Calu3 (cell line): ENCODE measurements at regions of chr1 and their contacts with region 1.

Region 1: DNA sequence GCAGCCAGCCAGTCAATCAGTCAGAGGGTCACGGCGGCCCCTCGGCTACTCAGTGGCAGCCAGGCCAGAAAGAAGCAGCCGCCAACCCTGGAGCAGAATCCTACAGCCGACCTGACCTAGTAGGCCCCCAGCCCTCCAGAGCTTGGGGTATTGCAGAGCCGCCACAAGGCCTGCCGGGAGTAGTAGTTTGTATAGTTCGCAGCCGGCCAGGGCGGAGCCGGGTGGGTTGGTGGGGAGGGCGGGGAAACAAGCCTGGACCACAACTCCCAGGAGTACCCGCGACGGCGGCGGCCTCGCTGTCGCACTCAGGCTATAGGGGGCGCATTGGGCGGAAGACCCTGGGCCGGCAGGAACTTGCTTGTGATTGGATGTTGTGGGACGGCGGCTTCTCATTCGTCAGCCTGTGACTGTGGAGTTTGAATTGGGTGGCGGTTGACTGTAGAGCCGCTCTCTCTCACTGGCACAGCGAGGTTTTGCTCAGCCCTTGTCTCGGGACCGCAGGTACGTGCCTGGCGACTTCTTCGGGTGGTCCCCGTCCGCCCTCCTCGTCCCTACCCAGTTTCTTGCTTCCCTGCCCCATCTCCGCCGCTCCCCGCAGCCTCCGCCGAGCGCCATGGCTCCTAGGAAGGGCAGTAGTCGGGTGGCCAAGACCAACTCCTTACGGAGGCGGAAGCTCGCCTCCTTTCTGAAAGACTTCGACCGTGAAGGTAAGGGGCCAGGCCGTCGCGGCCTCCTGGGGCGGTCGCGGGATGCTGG is at the start of gene CDCA8:
- DNase-seq: peak; percentile 98
- H3K4me3 Mint-ChIP-seq: peak within 1 kb of the TSS; percentile 95
- H3K27ac Mint-ChIP-seq: peak within 1 kb of the TSS; percentile 77
- H3K4me1 Mint-ChIP-seq: peaks cover 26% of the 10 kb centered on the region
- H3K27me3 Mint-ChIP-seq: no peaks in the 10 kb centered on the region
- CTCF ChIP-seq: peak; percentile 77
- total RNA-seq, gene CDCA8: 33.2 and 34.5 TPM in 2 replicates

Region 2: GRCh38 chr1:37655274-37655673 is 37.0 kb before region 1 on chr1:
- CTCF ChIA-PET with region 1: no interaction called
- intact Hi-C with region 1: no loop called
- DNase-seq: no peak
- H3K4me3 Mint-ChIP-seq: no peak overlapping the region
- H3K27ac Mint-ChIP-seq: no peak overlapping the region
- H3K4me1 Mint-ChIP-seq: no peaks in the 10 kb centered on the region
- H3K27me3 Mint-ChIP-seq: peaks cover 97% of the 10 kb centered on the region
- CTCF ChIP-seq: no peak

Region 3: GRCh38 chr1:37755290-37755689 is 63.0 kb after region 1 on chr1:
- CTCF ChIA-PET with region 1: no interaction called
- intact Hi-C with region 1: loop called (anchors 5 kb)
- DNase-seq: no peak
- H3K4me3 Mint-ChIP-seq: no peak overlapping the region
- H3K27ac Mint-ChIP-seq: no peak overlapping the region
- H3K4me1 Mint-ChIP-seq: no peaks in the 10 kb centered on the region
- H3K27me3 Mint-ChIP-seq: no peaks in the 10 kb centered on the region
- CTCF ChIP-seq: no peak

Region 4: GRCh38 chr1:37765916-37766664 is 73.8 kb after region 1 on chr1:
- CTCF ChIA-PET with region 1: interaction called, 15 read pairs
- intact Hi-C with region 1: no loop called
- DNase-seq: peak; percentile 24
- H3K4me3 Mint-ChIP-seq: peak overlapping the region; percentile 58
- H3K27ac Mint-ChIP-seq: no peak overlapping the region
- H3K4me1 Mint-ChIP-seq: no peaks in the 10 kb centered on the region
- H3K27me3 Mint-ChIP-seq: peaks cover 93% of the 10 kb centered on the region
- CTCF ChIP-seq: peak; percentile 28

Region 5: DNA sequence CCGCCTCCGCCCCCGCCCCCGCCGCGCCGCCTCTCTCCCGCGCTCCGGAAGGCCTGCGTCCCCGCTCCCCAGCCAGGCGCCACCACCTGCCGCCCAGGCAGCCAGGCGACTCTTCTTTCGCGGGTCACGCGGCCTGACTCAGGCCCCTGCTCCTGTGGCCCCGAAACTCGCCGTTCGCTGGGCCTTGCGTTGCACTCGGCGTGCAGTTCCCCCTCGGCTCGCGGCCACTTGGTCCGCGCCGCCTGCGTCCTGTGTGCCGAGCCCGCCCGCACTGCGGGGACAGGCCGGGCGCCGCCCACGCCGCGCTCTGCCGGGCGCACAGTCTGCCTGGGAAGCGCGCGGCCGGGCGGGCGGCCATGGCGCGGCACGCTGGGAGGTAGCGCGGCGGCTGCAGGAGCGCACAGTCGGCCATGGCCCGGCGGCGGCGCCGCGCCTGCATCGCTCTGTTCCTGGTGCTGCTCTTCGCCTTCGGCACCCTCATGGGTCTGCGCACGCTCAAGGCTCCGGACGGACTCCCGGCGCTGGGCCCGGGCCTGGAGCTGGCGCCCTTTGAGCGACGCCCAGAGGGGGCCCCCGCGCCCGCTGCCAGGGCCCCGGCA is 101.6 kb after region 1 on chr1 and contains the start of gene MANEAL:
- CTCF ChIA-PET with region 1: interaction called, 12 read pairs
- intact Hi-C with region 1: no loop called
- DNase-seq: peak; percentile 63
- H3K4me3 Mint-ChIP-seq: peak within 1 kb of the TSS; percentile 68
- H3K27ac Mint-ChIP-seq: no peak within 1 kb of the TSS
- H3K4me1 Mint-ChIP-seq: peaks cover 17% of the 10 kb centered on the region
- H3K27me3 Mint-ChIP-seq: peaks cover 33% of the 10 kb centered on the region
- CTCF ChIP-seq: no peak
- total RNA-seq, gene MANEAL: 28.1 and 28.6 TPM in 2 replicates

Region 6: DNA sequence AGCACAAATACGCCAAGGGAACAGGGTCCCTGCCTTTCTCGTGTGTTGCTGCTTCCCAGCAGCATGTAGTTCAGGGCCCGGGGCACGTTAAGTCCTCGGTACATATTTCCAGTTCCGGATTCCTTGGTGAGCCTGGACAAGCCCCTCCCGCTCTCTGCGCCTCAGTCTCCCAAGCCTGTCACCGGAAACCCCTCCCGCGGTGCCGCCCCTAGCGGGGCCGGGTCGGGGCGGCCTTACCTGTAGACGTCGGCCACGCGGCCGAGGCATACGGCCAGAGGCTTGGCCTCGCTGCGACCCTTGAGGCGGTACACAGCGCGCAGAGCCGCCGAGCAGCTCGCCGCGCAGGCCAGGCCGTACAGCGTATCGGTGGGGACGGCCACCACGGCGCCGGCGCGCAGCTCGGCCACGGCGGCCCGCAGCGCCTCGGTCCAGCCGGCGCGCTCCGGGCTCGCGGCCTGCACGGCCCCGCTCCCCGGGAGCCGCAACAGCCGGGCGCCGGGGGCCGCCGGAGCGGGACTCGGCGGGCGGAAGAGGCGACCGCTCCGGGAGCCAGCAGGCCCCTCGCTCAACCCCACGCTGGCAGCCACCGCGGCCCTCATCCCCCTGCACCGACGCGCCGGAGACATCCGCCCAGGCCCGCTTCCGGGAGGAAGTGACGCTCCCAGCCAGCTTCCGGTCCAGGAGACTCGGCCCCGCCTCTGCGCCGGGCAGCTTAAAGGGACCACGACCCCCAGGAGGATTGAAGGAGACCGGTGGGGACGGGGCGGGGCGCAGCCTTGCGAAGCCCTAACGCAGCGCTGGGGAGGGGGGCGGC is 115.5 kb after region 1 on chr1 and contains the starts of genes C1orf122 and YRDC:
- CTCF ChIA-PET with region 1: interaction called, 4 read pairs
- intact Hi-C with region 1: loop called (anchors 10 kb)
- DNase-seq: peak; percentile 96
- H3K4me3 Mint-ChIP-seq: peak within 1 kb of the TSS; percentile 95
- H3K27ac Mint-ChIP-seq: peak within 1 kb of the TSS; percentile 96
- H3K4me1 Mint-ChIP-seq: peaks cover 13% of the 10 kb centered on the region
- H3K27me3 Mint-ChIP-seq: no peaks in the 10 kb centered on the region
- CTCF ChIP-seq: no peak
- total RNA-seq, gene C1orf122: 41.3 and 43.6 TPM in 2 replicates
- total RNA-seq, gene YRDC: 18.6 and 18.8 TPM in 2 replicates